ENCODE measurements at regions of chr3 and their contacts with region 1.

Region 1: GRCh38 chr3:133927540-133928066 is 31.9 kb upstream of the RAB6B start:
- DNase-seq: no peak
- ATAC-seq: peak; percentile 83
- H3K4me3 ChIP-seq: peak overlapping the region; percentile 42 to 72 (median 51); a peak in 5 of 6 replicates
- H3K27ac ChIP-seq: no peak overlapping the region
- H3K4me1 ChIP-seq: peaks cover 11% of the 10 kb centered on the region
- H3K27me3 ChIP-seq: peaks cover 1 to 42% of the 10 kb centered on the region in 2 experiments; a peak in 4 of 5 replicates
- CTCF ChIP-seq: peak; percentile 56
- EP300 ChIP-seq: no peak
- POLR2A ChIP-seq: no peak
- RAD21 ChIP-seq: peak; percentile 68

Region 2: DNA sequence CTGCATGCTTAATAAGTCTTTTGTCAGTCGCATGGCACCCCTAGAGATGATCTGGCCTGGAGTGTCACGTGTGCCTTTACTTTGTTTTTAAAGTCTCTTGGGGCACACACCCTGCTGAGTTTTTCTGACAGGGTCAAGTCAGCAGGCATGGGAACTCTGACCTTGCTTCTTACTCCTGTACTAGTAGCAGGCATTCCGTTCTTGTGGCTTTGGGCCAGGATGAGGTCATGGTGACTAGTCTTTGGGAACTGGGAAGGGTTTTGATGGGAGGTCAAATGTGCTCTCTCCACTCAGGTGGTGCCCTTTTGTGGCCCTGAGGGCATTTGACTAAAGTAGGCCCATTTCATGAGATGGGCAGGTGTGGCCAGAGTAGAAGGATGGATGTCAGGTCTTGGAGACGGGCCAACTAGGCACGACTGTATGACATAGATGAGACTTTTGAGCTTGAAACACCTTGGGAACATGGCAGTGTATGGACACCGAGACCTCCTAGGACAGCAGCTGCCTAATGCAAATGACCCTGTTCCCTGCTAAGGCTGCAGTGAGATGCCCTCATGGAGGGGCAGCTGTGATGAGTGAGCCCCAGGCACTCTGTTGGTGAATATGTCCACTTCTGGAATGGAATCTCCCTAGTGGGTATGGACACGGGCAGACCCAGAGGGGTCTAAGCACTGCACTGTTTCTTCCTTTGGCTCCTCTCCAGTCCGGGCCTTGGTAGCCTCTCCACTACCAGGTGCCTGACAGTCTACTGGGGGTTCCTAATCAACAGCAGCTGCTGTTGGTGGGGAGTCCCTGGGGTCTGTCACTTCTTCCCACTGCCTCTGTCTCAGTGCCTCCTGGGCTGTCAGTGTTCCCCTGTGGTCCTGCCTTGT is 105.6 kb before region 1 on chr3:
- CTCF ChIA-PET with region 1: interaction called, 9 read pairs
- POLR2A ChIA-PET with region 1: no interaction called
- in situ Hi-C with region 1: no loop called
- intact Hi-C with region 1: loop called (anchors 1 kb)
- DNase-seq: peak; percentile 83
- ATAC-seq: peak; percentile 82
- H3K4me3 ChIP-seq: no peak overlapping the region
- H3K27ac ChIP-seq: no peak overlapping the region
- H3K4me1 ChIP-seq: 0 out of 2 replicates have a peak, but pooled peaks cover 5% of the 10 kb centered on the region
- H3K27me3 ChIP-seq: no peaks in the 10 kb centered on the region
- CTCF ChIP-seq: peak; percentile 69
- EP300 ChIP-seq: no peak
- POLR2A ChIP-seq: peak in 1 of 2 experiments; percentile 29; a peak in 1 of 4 replicates
- RAD21 ChIP-seq: 0 out of 2 replicates have a peak, but pooled peaks have one; percentile 32

Region 3: GRCh38 chr3:134039161-134039862 is 111.7 kb after region 1 on chr3:
- CTCF ChIA-PET with region 1: interaction called, 12 read pairs
- POLR2A ChIA-PET with region 1: no interaction called
- in situ Hi-C with region 1: loop called (anchors 10 kb)
- intact Hi-C with region 1: loop called (anchors 1 kb)
- DNase-seq: peak; percentile 40
- ATAC-seq: peak; percentile 97
- H3K4me3 ChIP-seq: peak overlapping the region in 1 of 3 experiments; percentile 44; a peak in 1 of 6 replicates
- H3K27ac ChIP-seq: no peak overlapping the region
- H3K4me1 ChIP-seq: peaks cover 30% of the 10 kb centered on the region
- H3K27me3 ChIP-seq: no peaks in the 10 kb centered on the region; a peak in 1 of 5 replicates
- CTCF ChIP-seq: peak; percentile 88
- EP300 ChIP-seq: no peak
- POLR2A ChIP-seq: no peak
- RAD21 ChIP-seq: peak; percentile 79

Region 4: GRCh38 chr3:134048278-134049011 is 120.8 kb after region 1 on chr3:
- CTCF ChIA-PET with region 1: no interaction called
- POLR2A ChIA-PET with region 1: no interaction called
- in situ Hi-C with region 1: loop called (anchors 10 kb)
- intact Hi-C with region 1: no loop called
- DNase-seq: no peak
- ATAC-seq: no peak
- H3K4me3 ChIP-seq: no peak overlapping the region
- H3K27ac ChIP-seq: no peak overlapping the region
- H3K4me1 ChIP-seq: no peaks in the 10 kb centered on the region
- H3K27me3 ChIP-seq: peaks cover 0 to 6% of the 10 kb centered on the region in 2 experiments; a peak in 1 of 5 replicates
- CTCF ChIP-seq: no peak
- EP300 ChIP-seq: no peak
- POLR2A ChIP-seq: no peak
- RAD21 ChIP-seq: no peak